Activated B cell treated with CpG ODN at 0.5 μM for 24 hours (primary cell): ENCODE measurements at regions of chr22 and their contacts with region 1.

Region 1: GRCh38 chr22:50030297-50031188 is 18.0 kb upstream of the IL17REL start:
- DNase-seq: peak; percentile 77
- ATAC-seq: peak; percentile 97
- H3K4me3 Mint-ChIP-seq: no peak overlapping the region
- H3K27ac Mint-ChIP-seq: no peak overlapping the region
- H3K4me1 Mint-ChIP-seq: peaks cover 7% of the 10 kb centered on the region
- H3K27me3 Mint-ChIP-seq: peaks cover 8% of the 10 kb centered on the region
- CTCF ChIP-seq: peak; percentile 75

Region 2: DNA sequence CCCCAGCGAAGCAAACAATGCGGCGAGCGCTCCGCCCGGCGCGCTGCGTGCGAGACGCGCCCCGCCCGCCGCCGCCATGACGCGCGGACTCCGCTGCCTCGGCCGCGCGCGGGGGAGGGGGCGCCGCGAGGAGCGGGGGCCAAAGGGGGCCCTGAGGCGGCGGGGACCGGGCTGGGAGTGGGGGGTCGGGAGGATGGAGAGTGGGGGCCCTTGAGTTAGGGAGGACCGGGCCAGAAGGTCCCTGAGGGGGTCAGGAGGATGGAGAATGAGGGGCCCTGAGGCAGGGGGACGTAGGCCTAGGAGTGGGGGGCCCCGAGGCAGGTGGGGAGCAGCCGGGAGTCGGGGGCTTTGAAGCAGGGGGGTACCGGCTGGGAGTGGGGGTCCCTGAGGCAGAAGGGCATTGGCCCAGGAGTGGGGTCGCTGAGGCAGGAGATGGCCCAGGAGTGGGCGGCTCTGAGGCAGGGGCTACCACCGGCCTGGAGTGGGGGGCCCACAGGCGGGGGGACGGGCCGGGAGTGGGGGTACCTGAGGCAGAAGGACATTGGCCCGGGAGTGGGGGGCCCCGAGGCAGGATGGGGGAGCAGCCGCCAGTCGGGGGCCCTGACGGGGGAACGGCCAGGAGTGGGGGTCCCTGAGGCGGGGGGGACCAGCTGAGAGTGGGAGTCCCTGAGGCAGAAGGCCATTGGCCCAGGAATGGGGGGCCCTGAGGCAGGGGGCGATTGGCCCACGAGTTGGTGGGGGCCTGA is 202.5 kb before region 1 on chr22 and contains the start of gene BRD1:
- CTCF ChIA-PET with region 1: no interaction called
- POLR2A ChIA-PET with region 1: no interaction called
- intact Hi-C with region 1: loop called (anchors 10 kb)
- DNase-seq: peak; percentile 66
- ATAC-seq: peak; percentile 78
- H3K4me3 Mint-ChIP-seq: peak within 1 kb of the TSS; percentile 84
- H3K27ac Mint-ChIP-seq: peak within 1 kb of the TSS; percentile 63
- H3K4me1 Mint-ChIP-seq: peaks cover 47% of the 10 kb centered on the region
- H3K27me3 Mint-ChIP-seq: peaks cover 4% of the 10 kb centered on the region
- CTCF ChIP-seq: no peak
- total RNA-seq, gene BRD1: 37.5 and 45.8 TPM in 2 replicates

Region 3: DNA sequence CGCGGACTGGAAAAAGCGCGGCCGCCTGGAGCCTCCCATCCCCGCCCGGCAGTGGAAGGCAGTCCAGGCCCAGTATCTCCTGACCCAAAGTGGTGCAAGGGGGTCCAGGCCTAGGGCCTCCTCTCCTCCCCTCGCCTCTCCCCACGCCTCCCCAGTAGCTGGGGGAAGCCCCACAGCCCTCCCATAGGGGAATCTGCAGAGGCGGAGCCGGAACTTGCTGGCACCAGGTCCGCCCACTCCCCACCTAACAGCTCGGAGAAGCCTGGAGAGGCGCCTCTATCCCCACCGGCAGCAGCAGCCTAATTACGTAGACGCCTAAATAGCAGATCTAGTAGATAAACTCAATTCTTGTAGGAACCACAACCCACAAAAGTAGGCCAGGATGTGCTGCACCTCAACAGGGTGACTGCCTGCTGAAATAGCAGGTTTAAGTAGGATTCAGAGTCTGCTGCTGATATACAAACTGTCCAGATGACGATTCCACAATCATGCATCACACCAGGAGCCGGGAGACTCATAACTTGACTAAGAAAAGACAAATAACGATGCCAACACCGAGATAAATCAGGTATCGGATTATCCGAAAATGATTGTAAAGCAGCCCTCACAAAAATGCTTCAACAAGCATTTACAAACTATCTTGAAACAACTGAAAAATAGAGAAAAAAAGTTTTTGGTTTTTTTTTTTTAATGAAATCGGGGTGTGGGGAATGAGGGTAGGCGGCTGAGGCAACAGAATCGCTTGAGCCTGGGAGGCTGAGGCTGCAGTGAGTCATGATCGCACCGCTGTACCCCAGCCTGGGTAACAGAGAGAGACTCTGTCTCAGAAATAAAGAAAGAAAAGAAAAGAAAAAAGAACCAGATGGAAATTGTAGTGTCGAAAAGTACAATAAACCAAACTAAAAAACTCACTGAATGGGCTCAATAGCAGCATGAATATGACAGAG is 191.5 kb before region 1 on chr22:
- CTCF ChIA-PET with region 1: no interaction called
- POLR2A ChIA-PET with region 1: no interaction called
- intact Hi-C with region 1: no loop called
- DNase-seq: peak; percentile 49
- ATAC-seq: peak; percentile 99
- H3K4me3 Mint-ChIP-seq: peak overlapping the region; percentile 64
- H3K27ac Mint-ChIP-seq: peak overlapping the region; percentile 37
- H3K4me1 Mint-ChIP-seq: peaks cover 8% of the 10 kb centered on the region
- H3K27me3 Mint-ChIP-seq: peaks cover 9% of the 10 kb centered on the region
- CTCF ChIP-seq: no peak

Region 4: GRCh38 chr22:49936018-49936952 is 94.3 kb before region 1 on chr22:
- CTCF ChIA-PET with region 1: interaction called, 91 read pairs
- POLR2A ChIA-PET with region 1: interaction called, 35 read pairs
- intact Hi-C with region 1: no loop called
- DNase-seq: peak; percentile 92
- ATAC-seq: peak; percentile 75
- H3K4me3 Mint-ChIP-seq: peak overlapping the region; percentile 61
- H3K27ac Mint-ChIP-seq: peak overlapping the region; percentile 82
- H3K4me1 Mint-ChIP-seq: peaks cover 42% of the 10 kb centered on the region
- H3K27me3 Mint-ChIP-seq: no peaks in the 10 kb centered on the region
- CTCF ChIP-seq: no peak

Region 5: GRCh38 chr22:49992921-49993648 is 37.5 kb before region 1 on chr22:
- CTCF ChIA-PET with region 1: interaction called, 25 read pairs
- POLR2A ChIA-PET with region 1: interaction called, 7 read pairs
- intact Hi-C with region 1: loop called (anchors 1 kb)
- DNase-seq: peak; percentile 61
- ATAC-seq: peak; percentile 98
- H3K4me3 Mint-ChIP-seq: peak overlapping the region; percentile 41
- H3K27ac Mint-ChIP-seq: peak overlapping the region; percentile 54
- H3K4me1 Mint-ChIP-seq: peaks cover 13% of the 10 kb centered on the region
- H3K27me3 Mint-ChIP-seq: no peaks in the 10 kb centered on the region
- CTCF ChIP-seq: no peak